T-cell (primary cell): ENCODE measurements at regions of chr17 and their contacts with region 1.

Region 1: DNA sequence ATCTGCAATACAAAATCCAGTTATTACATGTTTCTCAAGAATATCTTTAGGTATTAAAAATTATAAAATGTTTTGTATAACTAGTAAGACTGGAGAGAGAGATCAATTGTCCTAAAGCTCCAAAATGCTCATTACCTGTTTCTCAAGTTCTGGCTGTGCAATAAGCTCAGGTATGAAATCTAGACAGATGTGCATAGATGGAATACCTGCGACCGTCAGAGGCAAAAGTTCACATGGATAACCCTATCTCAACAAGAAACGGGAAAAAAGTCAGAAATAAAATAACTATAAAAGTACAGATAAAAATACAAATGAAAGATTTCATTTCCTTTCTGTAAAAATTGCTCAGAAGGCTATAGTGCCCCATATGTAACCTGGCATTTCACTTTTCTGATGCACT is 5.8 kb upstream of the BRIP1 start:
- DNase-seq: no peak
- ATAC-seq: no peak
- H3K4me3 ChIP-seq: no peak overlapping the region
- H3K4me3 Mint-ChIP-seq: no peak overlapping the region
- H3K27ac ChIP-seq: no peak overlapping the region
- H3K27ac Mint-ChIP-seq: no peak overlapping the region
- H3K4me1 ChIP-seq: no peaks in the 10 kb centered on the region
- H3K4me1 Mint-ChIP-seq: peaks cover 3 to 10% (median 8%) of the 10 kb centered on the region in 3 donors
- H3K27me3 ChIP-seq: no peaks in the 10 kb centered on the region
- H3K27me3 Mint-ChIP-seq: no peaks in the 10 kb centered on the region

Region 2: GRCh38 chr17:61927200-61928165 is 58.3 kb after region 1 on chr17 and contains the start of gene INTS2:
- CTCF ChIA-PET with region 1: no interaction called
- POLR2A ChIA-PET with region 1: no interaction called
- DNase-seq: peak; percentile 90 to 97 (median 95)
- ATAC-seq: peak; percentile 89 to 92 (median 90)
- H3K4me3 ChIP-seq: peak within 1 kb of the TSS; percentile 80 to 81
- H3K4me3 Mint-ChIP-seq: peak within 1 kb of the TSS; percentile 87 to 92 (median 90)
- H3K27ac ChIP-seq: peak within 1 kb of the TSS; percentile 80
- H3K27ac Mint-ChIP-seq: peak within 1 kb of the TSS; percentile 95
- H3K4me1 ChIP-seq: peaks cover 10 to 16% of the 10 kb centered on the region in 2 experiments
- H3K4me1 Mint-ChIP-seq: peaks cover 21 to 22% (median 21%) of the 10 kb centered on the region in 3 donors
- H3K27me3 ChIP-seq: peaks cover 0 to 8% of the 10 kb centered on the region in 2 experiments
- H3K27me3 Mint-ChIP-seq: peaks cover 4% of the 10 kb centered on the region in 2 donors
- total RNA-seq, gene INTS2: 15.2 to 21.2 (median 16.9) TPM

Region 3: DNA sequence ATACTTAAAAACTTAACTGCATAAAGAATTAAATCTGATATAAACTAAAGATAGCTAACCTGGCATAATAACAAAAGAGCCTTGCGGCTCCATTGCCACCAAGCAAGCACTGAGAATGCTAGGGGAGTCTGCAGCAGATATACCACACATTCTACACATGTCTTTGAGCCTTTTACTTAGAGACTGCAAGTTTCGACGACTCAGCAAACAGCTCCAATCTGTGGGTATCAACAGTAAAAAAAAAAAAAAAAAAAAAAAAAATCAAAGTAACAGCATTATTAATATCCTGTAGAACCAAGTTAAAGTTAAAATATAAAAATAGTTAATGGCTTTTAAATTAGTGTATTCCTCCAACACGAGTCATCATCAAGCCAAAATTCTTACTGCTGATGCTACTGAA is 86.5 kb after region 1 on chr17:
- CTCF ChIA-PET with region 1: no interaction called
- POLR2A ChIA-PET with region 1: interaction called in 1 of 2 experiments, 10 read pairs
- DNase-seq: no peak
- ATAC-seq: no peak
- H3K4me3 ChIP-seq: no peak overlapping the region
- H3K4me3 Mint-ChIP-seq: no peak overlapping the region
- H3K27ac ChIP-seq: no peak overlapping the region
- H3K27ac Mint-ChIP-seq: no peak overlapping the region
- H3K4me1 ChIP-seq: no peaks in the 10 kb centered on the region
- H3K4me1 Mint-ChIP-seq: no peaks in the 10 kb centered on the region
- H3K27me3 ChIP-seq: no peaks in the 10 kb centered on the region
- H3K27me3 Mint-ChIP-seq: no peaks in the 10 kb centered on the region